Activated CD4-positive, alpha-beta T cell treated with anti-CD3 and anti-CD28 coated beads for 36 hours (primary cell): ENCODE measurements at regions of chr1 and their contacts with region 1.

Region 1: DNA sequence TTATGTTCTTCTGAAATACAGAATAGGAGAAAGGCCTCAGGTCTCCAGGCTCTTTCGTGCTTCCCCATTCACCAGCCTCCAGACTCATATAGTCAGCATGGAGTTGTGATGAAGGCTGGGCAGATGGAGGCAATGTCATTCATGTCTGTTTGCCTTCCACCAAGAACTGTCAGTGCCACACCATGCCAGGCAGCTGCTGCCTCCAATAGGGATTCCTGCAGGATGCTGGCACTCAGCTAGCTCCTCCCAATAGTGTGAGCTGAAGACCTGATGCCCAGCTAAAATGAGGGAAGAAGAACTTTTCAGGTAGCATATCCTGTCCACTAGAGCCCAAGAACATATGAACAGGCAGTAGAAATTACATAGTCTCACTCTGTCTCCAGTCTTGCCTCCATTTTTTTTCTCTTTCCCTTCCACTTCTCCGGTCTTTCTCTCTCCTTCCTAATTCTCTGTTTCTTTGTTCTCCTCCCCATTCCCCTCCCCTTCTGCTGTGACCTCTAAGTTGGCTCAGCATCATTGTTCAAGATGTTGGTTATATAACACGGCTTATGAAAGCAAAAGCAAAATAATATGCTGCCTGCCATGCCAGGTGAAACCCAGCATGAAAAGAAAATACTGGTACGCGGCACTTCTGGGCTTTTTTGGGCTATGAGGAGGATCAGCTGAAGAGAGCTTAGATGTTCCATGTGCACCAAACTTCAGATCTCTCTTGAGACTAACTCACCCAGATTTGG is 17.3 kb downstream of the GLUL start:
- DNase-seq: no peak
- ATAC-seq: no peak
- H3K4me3 Mint-ChIP-seq: no peak overlapping the region
- H3K27ac Mint-ChIP-seq: no peak overlapping the region
- H3K4me1 Mint-ChIP-seq: no peaks in the 10 kb centered on the region
- H3K27me3 Mint-ChIP-seq: no peaks in the 10 kb centered on the region

Region 2: DNA sequence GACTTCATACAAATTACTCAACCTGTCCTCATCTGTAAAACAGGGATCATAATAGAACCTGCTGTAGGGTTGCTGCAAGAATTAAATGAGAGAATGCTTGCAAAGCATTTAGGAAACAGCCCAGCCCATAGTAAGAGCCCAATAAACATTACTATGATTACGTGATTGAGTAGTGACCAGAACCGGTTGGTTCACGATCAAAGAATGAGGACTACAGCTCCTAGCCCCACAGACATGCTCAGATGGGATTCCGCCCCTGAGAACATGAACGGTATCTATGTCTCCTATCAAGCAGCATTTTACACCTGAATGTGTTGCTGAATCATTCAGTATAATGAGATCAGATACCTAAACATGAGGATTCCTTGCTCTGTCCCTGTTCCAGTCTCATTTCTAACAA is 207.9 kb before region 1 on chr1:
- CTCF ChIA-PET with region 1: no interaction called
- POLR2A ChIA-PET with region 1: interaction called, 11 read pairs
- intact Hi-C with region 1: no loop called
- DNase-seq: no peak
- ATAC-seq: no peak
- H3K4me3 Mint-ChIP-seq: no peak overlapping the region
- H3K27ac Mint-ChIP-seq: no peak overlapping the region
- H3K4me1 Mint-ChIP-seq: no peaks in the 10 kb centered on the region
- H3K27me3 Mint-ChIP-seq: peaks cover 2% of the 10 kb centered on the region